Natural killer cell (primary cell): ENCODE measurements at regions of chr13 and their contacts with region 1.

Region 1: GRCh38 chr13:49278211-49278610 is 30.5 kb downstream of the CDADC1 start:
- DNase-seq: no peak
- ATAC-seq: no peak
- H3K4me3 ChIP-seq: no peak overlapping the region
- H3K4me3 Mint-ChIP-seq: no peak overlapping the region
- H3K27ac ChIP-seq: no peak overlapping the region
- H3K27ac Mint-ChIP-seq: no peak overlapping the region
- H3K4me1 ChIP-seq: no peaks in the 10 kb centered on the region
- H3K4me1 Mint-ChIP-seq: no peaks in the 10 kb centered on the region
- H3K27me3 ChIP-seq: no peaks in the 10 kb centered on the region
- H3K27me3 Mint-ChIP-seq: no peaks in the 10 kb centered on the region
- CTCF ChIP-seq: no peak

Region 2: DNA sequence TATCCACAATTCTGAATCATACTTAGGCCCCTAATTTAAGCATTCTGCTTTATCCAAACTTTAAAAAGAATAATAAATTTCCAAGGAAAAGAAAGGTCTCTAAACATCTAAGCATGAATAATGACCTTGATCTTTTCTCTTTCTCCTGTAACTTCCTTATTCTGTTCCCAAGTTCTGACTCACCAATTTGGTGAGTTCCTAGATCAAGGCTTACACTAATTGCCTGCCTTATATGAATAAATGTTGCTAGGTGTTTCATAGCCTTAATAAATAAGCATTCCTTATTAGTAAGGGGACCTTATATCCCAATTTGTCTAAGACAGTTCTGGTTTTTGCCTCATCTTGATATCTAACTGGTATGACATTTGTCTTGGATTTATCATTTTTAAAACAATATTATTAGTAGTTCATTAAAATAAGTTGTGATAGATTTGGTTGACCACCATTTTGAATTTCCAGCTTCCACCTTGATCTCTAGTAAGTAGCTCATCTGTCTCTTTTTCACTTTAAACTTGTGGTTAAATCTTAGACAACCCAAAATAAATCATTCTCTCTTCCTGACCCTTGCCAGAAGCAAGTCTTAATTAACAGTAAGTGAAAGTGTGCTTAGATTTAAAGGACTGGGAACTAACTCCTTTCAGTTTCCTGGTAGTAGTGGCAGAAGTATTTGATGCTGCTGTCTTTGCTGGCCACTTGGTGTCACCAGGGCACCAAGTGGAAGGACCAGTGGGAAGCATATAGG is 179.3 kb before region 1 on chr13:
- intact Hi-C with region 1: loop called (anchors 2 kb)
- DNase-seq: peak in 1 of 2 donors; percentile 42
- ATAC-seq: peak in 2 of 3 donors; percentile 31 to 49
- H3K4me3 ChIP-seq: no peak overlapping the region
- H3K4me3 Mint-ChIP-seq: no peak overlapping the region
- H3K27ac ChIP-seq: no peak overlapping the region
- H3K27ac Mint-ChIP-seq: no peak overlapping the region
- H3K4me1 ChIP-seq: no peaks in the 10 kb centered on the region
- H3K4me1 Mint-ChIP-seq: peaks cover 0 to 5% of the 10 kb centered on the region in 2 donors
- H3K27me3 ChIP-seq: no peaks in the 10 kb centered on the region
- H3K27me3 Mint-ChIP-seq: no peaks in the 10 kb centered on the region
- CTCF ChIP-seq: no peak

Region 3: GRCh38 chr13:49214917-49215376 is 63.3 kb before region 1 on chr13:
- intact Hi-C with region 1: loop called (anchors 5 kb)
- DNase-seq: peak; percentile 25 to 67
- ATAC-seq: peak; percentile 79 to 86 (median 83)
- H3K4me3 ChIP-seq: no peak overlapping the region
- H3K4me3 Mint-ChIP-seq: no peak overlapping the region
- H3K27ac ChIP-seq: no peak overlapping the region
- H3K27ac Mint-ChIP-seq: peak overlapping the region; percentile 5 to 31
- H3K4me1 ChIP-seq: peaks cover 15% of the 10 kb centered on the region
- H3K4me1 Mint-ChIP-seq: peaks cover 10 to 11% of the 10 kb centered on the region in 2 donors
- H3K27me3 ChIP-seq: peaks cover 12% of the 10 kb centered on the region
- H3K27me3 Mint-ChIP-seq: peaks cover 25 to 31% of the 10 kb centered on the region in 2 donors
- CTCF ChIP-seq: peak; percentile 20

Region 4: GRCh38 chr13:49240017-49240416 is 38.2 kb before region 1 on chr13:
- intact Hi-C with region 1: loop called (anchors 1 kb)
- DNase-seq: peak in 1 of 2 donors; percentile 69
- ATAC-seq: peak; percentile 69 to 91 (median 78)
- H3K4me3 ChIP-seq: no peak overlapping the region
- H3K4me3 Mint-ChIP-seq: no peak overlapping the region
- H3K27ac ChIP-seq: no peak overlapping the region
- H3K27ac Mint-ChIP-seq: no peak overlapping the region
- H3K4me1 ChIP-seq: no peaks in the 10 kb centered on the region
- H3K4me1 Mint-ChIP-seq: no peaks in the 10 kb centered on the region
- H3K27me3 ChIP-seq: no peaks in the 10 kb centered on the region
- H3K27me3 Mint-ChIP-seq: peaks cover 0 to 10% of the 10 kb centered on the region in 2 donors
- CTCF ChIP-seq: peak; percentile 37

Region 5: GRCh38 chr13:49356223-49356622 is 78.0 kb after region 1 on chr13:
- intact Hi-C with region 1: no loop called
- DNase-seq: no peak
- ATAC-seq: no peak
- H3K4me3 ChIP-seq: no peak overlapping the region
- H3K4me3 Mint-ChIP-seq: no peak overlapping the region
- H3K27ac ChIP-seq: no peak overlapping the region
- H3K27ac Mint-ChIP-seq: no peak overlapping the region
- H3K4me1 ChIP-seq: no peaks in the 10 kb centered on the region
- H3K4me1 Mint-ChIP-seq: no peaks in the 10 kb centered on the region
- H3K27me3 ChIP-seq: no peaks in the 10 kb centered on the region
- H3K27me3 Mint-ChIP-seq: no peaks in the 10 kb centered on the region
- CTCF ChIP-seq: no peak